ENCODE measurements at regions of chr1 and their contacts with region 1.

Region 1: DNA sequence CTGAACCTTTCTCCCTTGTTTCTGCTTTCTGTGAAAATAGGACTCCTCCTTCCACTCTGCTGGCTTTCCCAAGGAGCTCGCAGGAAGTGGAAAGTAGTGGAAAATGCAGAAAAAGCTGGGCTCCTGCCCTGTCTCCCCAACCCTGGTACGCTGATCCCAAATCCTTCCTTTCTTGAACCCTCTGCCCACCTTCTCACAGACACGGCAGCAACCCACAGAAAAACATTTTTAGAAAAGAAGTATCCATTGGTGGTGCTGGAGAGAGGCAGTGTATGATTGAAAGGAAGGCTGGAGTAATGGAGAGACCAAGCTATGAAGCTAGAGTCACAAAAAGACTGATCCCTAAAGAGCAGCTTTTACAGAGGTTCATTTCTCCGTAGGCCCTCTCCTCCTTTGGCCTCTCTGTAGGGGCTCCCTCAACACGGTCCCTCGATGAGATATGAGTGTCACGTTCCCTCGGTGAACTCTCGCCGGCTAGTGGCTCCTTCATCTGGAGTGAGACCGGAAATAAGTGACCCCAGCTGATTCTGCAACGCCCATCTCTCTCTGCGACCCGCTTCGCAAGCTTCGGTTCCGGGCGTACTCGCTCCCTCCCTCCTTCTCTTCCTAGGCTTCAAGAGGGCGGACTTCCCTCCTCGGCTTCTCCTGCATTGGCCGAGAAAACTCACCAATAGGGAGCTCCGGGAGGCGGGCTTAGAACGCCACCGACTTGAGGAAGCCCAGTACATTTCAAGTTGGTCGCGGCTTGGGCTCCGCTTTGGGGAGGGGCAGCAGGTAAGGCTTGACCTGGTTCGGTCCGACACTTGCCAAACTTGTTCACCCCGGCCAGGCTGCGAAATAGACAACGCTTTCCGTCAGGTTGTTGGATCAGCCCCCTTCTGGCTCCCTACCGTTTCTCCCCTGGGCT is at the starts of genes ANKRD34A and POLR3GL:
- DNase-seq: peak; percentile 97
- ATAC-seq: peak; percentile 88
- total RNA-seq, gene ANKRD34A: 0.62 TPM
- total RNA-seq, gene POLR3GL: 49.1 TPM

Region 2: DNA sequence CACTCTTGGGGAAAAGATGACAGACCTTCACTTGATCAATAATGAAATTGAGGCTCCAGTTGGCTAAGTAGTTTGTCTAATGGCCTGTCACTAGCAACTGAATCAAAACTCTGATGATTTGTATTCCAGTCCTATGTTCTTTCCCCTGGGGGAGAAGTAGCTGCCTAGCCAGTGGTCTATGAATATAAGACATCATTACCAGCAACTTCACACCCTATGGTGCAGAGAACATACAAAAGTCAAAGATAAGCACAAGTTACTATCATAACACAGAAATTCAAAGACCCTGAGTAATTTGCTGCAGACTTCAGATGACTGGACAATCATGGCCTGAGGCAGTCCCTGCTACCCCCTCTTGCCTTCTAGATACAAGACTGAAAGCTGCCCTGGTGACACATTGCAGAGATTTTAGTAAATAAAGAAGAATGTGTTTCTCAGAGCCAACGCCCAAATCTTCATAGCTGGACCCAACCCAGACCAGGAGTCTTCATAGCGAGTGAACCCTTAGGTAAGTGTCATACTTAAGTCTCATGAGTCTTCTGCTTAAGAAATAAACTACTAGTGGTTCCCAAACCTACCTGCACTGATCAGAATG is 258.1 kb before region 1 on chr1:
- intact Hi-C with region 1: no loop called
- DNase-seq: no peak
- ATAC-seq: no peak

Region 3: DNA sequence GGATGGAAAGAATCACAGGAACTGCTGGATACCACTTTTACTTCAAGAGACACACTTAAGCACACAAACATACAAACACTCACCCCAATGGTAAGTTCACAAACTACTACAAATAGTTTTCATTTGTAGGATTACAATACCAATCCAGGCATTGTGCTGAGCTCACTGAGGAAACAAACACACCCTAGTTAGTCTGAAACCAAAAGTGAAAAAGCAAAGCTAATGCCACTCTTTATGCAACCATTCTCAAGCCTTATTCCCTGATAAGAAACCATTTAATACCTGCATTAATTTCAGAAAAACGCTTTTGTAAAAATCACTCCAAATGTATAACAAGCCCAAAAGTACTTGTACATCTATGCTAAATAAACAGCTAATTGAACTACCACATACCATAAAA is 178.7 kb before region 1 on chr1:
- intact Hi-C with region 1: no loop called
- DNase-seq: no peak
- ATAC-seq: no peak

Region 4: DNA sequence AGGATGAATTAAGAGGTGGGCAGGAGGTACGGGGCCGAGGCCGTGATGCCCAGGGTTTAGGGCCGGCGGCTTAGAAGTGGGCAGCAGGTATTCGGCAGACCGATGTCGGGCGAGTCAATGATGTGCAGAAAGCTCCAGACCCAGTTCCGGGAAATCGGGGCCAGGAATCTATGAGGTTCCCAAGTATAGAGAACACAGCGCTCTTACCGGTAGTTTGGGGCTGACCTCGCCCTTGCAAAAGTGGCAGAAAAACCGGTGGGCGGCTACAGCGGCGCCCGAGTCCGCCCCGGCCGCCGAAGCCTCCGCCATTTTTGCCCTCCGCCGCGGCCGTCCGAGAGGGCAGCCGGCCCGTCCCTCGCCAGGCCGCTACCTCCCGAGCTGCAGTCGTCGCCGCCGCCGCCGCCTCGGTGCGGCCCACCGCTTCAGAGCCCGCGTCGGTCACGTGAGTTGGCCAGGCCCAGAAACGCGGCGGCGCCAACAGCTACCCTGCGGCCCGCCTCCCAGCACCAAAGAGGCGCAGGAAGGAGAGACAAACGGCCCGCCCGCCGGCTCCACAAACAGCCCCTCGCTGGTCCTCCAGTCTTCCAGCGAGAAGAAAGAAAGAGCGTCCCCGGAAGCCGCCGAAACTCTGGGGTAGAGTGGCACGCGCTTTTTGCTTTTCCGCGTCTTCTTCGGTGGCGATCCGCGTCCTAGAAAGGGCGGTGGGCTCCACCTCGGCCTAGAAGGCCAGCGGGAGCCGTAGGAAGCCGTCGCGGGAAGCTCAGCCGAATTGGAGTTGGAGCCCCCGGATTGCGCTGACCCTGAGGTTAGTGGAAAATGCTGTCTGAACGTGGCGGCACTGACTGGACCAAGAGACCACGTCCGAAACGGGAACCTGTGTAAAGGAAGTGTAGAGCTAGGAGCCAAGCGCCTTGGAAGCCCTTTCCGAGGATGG is 140.4 kb before region 1 on chr1 and contains the starts of genes POLR3C and RNF115:
- intact Hi-C with region 1: no loop called
- DNase-seq: peak; percentile 97
- ATAC-seq: peak; percentile 97
- total RNA-seq, gene POLR3C: 11.4 TPM
- total RNA-seq, gene RNF115: 47.9 TPM

Region 5: GRCh38 chr1:146007506-146008133 is 43.4 kb after region 1 on chr1:
- intact Hi-C with region 1: loop called (anchors 5 kb)
- DNase-seq: no peak
- ATAC-seq: peak; percentile 27